ENCODE measurements at regions of chr10 and their contacts with region 1.

Region 1: DNA sequence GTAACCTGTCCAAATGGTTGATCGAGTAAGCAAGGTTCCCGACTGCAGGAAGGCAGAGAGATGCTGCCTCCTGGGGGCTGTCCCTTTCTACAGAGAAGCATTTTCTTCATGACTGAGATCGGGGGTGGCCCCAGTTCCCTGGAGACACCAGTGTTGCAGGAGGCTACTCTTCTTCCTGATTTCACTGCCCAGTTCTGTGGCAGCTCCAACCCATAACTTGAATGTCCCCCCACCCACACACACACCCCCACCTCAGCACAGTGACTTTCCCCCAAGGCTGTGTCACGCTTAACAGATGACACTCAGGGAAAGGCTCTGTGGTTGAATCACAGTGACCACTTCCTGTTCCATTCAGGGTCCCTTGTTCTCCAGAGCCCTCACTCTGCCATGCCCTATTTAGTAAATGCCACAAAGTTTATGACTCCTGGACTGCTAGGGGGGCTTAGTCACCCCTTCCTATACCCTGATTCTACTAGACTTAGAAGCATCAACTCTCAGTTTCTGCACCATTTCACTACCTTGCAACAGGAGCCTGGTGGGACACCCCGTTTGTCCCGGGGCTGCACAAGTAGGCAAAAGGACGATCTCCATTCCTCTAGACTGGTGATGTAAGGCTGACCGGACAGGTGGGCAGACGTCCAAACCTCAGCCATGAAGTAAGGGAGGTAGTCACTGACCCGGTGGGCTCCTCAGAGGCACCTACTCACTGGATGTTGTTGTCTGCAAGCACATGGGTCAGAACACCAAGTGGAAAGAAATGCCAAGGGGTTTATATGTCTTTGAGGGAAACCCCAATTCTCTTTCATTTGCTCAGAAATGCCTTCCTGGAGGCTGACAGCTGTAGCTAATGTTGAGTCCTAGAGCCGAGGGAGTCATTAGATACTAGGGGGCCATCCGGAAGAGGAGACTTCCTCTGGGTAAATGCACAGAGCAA is 31.3 kb upstream of the SMC3 start:
- DNase-seq: no peak
- ATAC-seq: peak; percentile 22 to 64
- H3K4me3 ChIP-seq: no peak overlapping the region
- H3K27ac ChIP-seq: no peak overlapping the region
- H3K4me1 ChIP-seq: no peaks in the 10 kb centered on the region
- H3K27me3 ChIP-seq: no peaks in the 10 kb centered on the region

Region 2: GRCh38 chr10:110311357-110311949 is 224.8 kb before region 1 on chr10:
- intact Hi-C with region 1: loop called in 2 of 4 experiments (anchors 5 to 10 kb)
- DNase-seq: peak; percentile 33 to 74 (median 57)
- ATAC-seq: peak; percentile 63 to 78
- H3K4me3 ChIP-seq: no peak overlapping the region
- H3K27ac ChIP-seq: no peak overlapping the region
- H3K4me1 ChIP-seq: no peaks in the 10 kb centered on the region
- H3K27me3 ChIP-seq: no peaks in the 10 kb centered on the region

Region 3: GRCh38 chr10:110354322-110354766 is 181.9 kb before region 1 on chr10:
- intact Hi-C with region 1: loop called in 2 of 4 experiments (anchors 10 kb)
- DNase-seq: peak; percentile 81 to 92 (median 88)
- ATAC-seq: peak; percentile 86
- H3K4me3 ChIP-seq: no peak overlapping the region
- H3K27ac ChIP-seq: no peak overlapping the region
- H3K4me1 ChIP-seq: peaks cover 4% of the 10 kb centered on the region
- H3K27me3 ChIP-seq: no peaks in the 10 kb centered on the region

Region 4: DNA sequence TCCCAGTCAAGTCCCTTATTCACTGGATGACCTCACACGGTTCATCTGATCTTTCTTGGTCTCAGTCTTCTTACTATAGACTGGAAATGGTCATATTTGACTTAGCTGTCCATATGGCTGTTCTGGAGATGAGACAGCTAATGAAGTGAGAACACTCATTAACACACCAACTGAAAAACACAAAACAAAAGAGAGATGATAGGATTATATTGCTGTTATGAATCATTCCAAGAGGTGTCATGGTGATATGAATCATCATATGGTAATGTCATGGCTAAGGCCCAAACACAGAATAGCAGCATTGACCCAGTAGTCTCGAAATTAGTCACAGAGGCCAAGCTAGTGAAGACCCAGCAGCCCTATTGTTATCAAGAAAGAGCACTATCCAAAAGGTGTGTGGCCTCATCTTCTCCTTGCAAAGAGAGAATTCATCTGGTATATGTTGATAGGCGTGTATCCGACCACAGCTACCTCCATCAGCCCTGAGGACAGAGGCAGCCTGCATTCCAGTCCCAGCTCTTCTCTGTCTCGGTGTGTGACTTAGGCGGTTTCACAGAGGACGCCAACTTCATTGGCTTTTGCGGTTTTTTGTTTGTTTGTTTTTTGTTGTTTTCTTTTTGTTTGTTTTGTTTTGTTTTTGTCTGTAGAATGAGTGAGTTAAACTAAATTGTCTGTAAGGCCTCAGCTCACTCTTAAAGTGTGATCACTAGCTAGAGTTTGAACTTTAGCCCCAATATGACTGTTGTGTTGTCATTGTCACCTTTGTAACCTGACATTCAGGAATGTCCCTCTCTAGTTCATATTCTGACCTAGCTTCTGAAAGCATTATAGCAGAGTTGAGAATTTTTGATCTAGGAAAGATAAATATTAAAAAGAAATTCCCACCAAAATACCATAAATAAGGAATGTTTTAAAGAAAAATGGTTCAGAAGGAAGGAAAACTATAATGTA is 238.1 kb after region 1 on chr10:
- intact Hi-C with region 1: no loop called
- DNase-seq: no peak
- ATAC-seq: peak; percentile 35 to 59
- H3K4me3 ChIP-seq: no peak overlapping the region
- H3K27ac ChIP-seq: peak overlapping the region; percentile 24
- H3K4me1 ChIP-seq: peaks cover 6% of the 10 kb centered on the region
- H3K27me3 ChIP-seq: no peaks in the 10 kb centered on the region

Region 5: GRCh38 chr10:111076191-111076681 is 540.0 kb after region 1 on chr10:
- intact Hi-C with region 1: no loop called
- DNase-seq: peak in 2 of 3 donors; percentile 75 to 79
- ATAC-seq: peak; percentile 79 to 84
- H3K4me3 ChIP-seq: peak overlapping the region; percentile 56
- H3K27ac ChIP-seq: no peak overlapping the region
- H3K4me1 ChIP-seq: peaks cover 3% of the 10 kb centered on the region
- H3K27me3 ChIP-seq: no peaks in the 10 kb centered on the region